A549 (cell line): ENCODE measurements at regions of chr11 and their contacts with region 1.

Region 1: DNA sequence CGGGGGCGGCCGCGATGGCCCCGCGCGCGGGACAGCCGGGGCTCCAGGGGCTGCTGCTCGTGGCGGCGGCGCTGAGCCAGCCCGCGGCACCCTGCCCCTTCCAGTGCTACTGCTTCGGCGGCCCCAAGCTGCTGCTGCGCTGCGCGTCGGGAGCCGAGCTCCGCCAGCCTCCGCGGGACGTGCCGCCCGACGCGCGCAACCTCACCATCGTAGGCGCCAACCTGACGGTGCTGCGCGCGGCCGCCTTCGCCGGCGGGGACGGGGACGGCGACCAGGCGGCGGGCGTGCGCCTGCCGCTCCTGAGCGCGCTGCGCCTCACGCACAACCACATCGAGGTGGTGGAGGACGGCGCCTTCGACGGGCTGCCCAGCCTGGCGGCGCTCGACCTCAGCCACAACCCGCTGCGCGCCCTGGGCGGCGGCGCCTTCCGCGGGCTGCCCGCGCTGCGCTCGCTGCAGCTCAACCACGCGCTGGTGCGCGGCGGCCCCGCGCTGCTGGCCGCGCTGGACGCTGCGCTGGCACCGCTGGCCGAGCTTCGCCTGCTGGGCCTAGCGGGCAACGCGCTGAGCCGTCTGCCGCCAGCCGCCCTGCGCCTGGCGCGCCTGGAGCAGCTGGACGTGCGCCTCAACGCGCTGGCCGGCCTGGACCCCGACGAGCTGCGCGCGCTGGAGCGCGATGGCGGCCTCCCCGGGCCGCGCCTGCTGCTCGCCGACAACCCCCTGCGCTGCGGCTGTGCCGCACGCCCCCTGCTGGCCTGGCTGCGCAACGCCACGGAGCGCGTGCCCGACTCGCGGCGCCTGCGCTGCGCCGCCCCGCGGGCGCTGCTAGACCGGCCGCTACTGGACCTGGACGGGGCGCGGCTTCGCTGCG is 697 bp downstream of the TPBGL start:
- DNase-seq: peak; percentile 86 to 87
- ATAC-seq: peak; percentile 79 to 90
- H3K4me3 ChIP-seq: peak overlapping the region; percentile 54
- H3K27ac ChIP-seq: peak overlapping the region; percentile 68 to 81; a peak in 5 of 6 replicates
- H3K4me1 ChIP-seq: peaks cover 10% of the 10 kb centered on the region; the same call in 2 of the 3 replicates
- CTCF ChIP-seq: peak; percentile 99
- EP300 ChIP-seq: no peak
- POLR2A ChIP-seq: 0 out of 2 replicates have a peak, but pooled peaks have one; percentile 36
- RAD21 ChIP-seq: peak; percentile 40 to 69; a peak in 4 of 5 replicates

Region 2: GRCh38 chr11:74937696-74938475 is 303.4 kb before region 1 on chr11:
- CTCF ChIA-PET with region 1: interaction called, 160 read pairs
- POLR2A ChIA-PET with region 1: no interaction called
- DNase-seq: no peak
- ATAC-seq: no peak
- H3K4me3 ChIP-seq: no peak overlapping the region
- H3K27ac ChIP-seq: no peak overlapping the region
- H3K4me1 ChIP-seq: no peaks in the 10 kb centered on the region
- CTCF ChIP-seq: no peak
- EP300 ChIP-seq: no peak
- POLR2A ChIP-seq: no peak
- RAD21 ChIP-seq: no peak

Region 3: DNA sequence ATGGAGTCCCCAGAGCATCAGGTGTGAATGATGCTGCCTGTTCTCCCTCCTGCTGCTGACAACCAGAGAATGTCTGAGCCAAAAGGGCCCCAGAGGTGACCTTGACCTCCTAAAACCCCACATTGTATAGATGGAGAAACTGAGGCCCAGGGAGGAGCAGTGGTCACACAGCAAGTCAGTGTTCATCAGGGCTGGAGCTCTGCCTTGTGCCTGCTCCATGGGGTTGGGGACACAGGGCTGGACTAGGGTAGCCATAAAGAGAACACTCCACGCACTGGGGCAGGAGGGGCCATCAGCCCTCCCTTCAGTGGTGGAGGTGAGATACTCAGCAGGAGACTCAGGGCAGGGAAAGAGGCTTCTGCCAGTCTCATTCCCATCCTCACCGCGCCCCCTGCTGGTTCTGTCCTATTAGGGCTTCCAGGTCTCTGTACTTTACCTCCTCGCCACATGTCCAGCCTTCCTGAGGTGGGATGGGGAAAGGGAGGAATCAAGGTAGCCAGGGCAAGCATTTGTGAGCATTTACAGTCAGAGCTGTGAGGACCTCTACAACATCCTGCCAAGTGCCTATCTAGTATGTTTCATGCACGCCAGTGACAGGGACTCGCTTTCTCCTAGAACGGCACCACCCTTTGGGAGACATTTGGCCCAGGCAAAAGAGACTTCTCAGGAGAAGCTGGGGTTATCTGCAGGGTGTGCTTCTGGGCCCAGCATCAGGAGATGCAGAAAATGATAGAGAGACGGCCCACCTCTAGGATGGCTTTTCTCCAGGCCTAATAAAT is 209.3 kb before region 1 on chr11:
- CTCF ChIA-PET with region 1: interaction called, 355 read pairs
- POLR2A ChIA-PET with region 1: no interaction called
- DNase-seq: peak; percentile 71
- ATAC-seq: peak; percentile 85 to 95
- H3K4me3 ChIP-seq: no peak overlapping the region
- H3K27ac ChIP-seq: peak overlapping the region in 1 of 2 experiments; percentile 63; a peak in 3 of 6 replicates
- H3K4me1 ChIP-seq: peaks cover 9% of the 10 kb centered on the region; the same call in 1 of the 3 replicates
- CTCF ChIP-seq: peak; percentile 67
- EP300 ChIP-seq: no peak
- POLR2A ChIP-seq: no peak
- RAD21 ChIP-seq: peak; percentile 53 to 66

Region 4: DNA sequence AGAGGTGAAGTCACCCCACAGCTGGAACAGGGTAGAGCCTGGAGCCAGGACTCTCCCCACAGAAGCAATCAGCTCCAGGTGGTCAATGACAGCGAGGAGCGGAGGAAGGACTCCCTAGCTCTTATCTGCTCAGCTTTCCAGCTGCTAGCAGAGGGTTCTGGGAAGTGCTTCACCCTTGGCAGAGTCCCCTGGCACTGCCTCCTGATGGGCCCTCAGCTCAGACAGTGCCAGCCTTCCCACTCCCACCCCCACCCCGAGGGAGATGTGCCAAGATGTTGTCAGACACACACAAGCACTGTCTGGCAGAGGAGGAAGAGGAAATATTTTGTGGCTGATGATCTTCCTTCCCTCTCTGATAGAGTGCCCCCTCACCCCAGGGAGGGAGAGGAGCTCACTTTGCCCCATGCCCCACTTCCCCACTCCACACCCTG is 46.1 kb before region 1 on chr11:
- CTCF ChIA-PET with region 1: interaction called, 46 read pairs
- POLR2A ChIA-PET with region 1: no interaction called
- DNase-seq: no peak
- ATAC-seq: peak in 1 of 2 experiments; percentile 34; a peak in 3 of 6 replicates
- H3K4me3 ChIP-seq: no peak overlapping the region
- H3K27ac ChIP-seq: peak overlapping the region in 1 of 2 experiments; percentile 55; a peak in 2 of 6 replicates
- H3K4me1 ChIP-seq: peaks cover 19% of the 10 kb centered on the region; the same call in 2 of the 3 replicates
- CTCF ChIP-seq: no peak
- EP300 ChIP-seq: no peak
- POLR2A ChIP-seq: no peak
- RAD21 ChIP-seq: no peak

Region 5: DNA sequence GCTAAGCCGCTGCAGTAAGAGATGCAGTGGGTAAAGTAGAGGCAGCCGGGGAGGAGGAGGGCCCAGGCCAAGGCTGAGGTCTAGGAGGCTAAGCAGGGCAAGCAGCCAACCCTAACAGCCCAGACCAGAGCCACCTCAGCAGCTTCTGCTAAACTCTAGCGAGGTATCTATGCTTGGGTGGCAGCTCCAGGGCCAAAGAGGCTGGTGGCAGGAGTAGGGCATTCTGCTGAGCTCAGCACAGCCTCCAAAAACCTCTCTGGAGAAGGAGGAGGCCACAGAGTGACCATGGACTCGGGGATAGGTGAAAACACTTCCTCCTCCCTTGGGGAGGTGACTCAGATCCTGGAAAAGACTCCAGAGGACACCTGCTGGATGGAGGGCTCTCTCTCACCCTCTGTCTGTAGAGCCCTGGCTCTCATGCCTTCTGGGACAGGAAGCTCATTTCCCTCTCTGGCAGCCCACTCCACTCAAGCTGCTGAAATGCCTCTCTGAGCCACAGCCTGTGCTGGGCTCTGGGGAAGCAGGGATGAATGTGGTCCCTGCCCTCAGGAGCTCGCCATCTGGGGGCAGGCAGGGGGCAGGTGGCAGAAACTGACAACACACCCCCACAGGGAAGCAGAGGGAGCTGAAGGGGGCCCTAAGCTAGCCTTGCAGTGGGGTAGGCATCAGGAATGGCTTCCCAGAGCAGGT is 17.2 kb before region 1 on chr11:
- CTCF ChIA-PET with region 1: interaction called, 123 read pairs
- POLR2A ChIA-PET with region 1: no interaction called
- DNase-seq: peak; percentile 21 to 29
- ATAC-seq: peak; percentile 92 to 95
- H3K4me3 ChIP-seq: no peak overlapping the region
- H3K27ac ChIP-seq: no peak overlapping the region
- H3K4me1 ChIP-seq: no peaks in the 10 kb centered on the region
- CTCF ChIP-seq: no peak
- EP300 ChIP-seq: no peak
- POLR2A ChIP-seq: no peak
- RAD21 ChIP-seq: no peak

Region 6: DNA sequence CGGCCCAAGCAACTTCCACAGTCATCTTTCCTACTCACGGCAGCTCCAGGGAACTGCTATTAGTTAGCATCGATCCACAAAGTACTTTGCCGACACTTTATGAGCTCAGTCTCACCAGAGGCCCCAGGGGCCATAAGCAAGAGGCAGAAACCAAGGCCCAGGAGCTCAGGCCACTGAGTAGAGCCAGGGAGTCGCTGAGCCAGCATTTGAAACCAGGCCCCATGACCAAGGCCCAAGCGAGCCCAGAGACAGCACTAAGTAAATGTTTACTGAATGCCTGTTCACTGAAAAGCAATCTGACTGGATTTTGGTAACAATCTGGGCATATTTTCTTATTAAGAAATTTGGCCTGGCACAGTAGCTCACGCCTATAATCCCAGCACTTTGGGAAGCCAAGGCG is 66.8 kb after region 1 on chr11:
- CTCF ChIA-PET with region 1: interaction called, 10 read pairs
- POLR2A ChIA-PET with region 1: no interaction called
- DNase-seq: no peak
- ATAC-seq: no peak
- H3K4me3 ChIP-seq: no peak overlapping the region
- H3K27ac ChIP-seq: no peak overlapping the region
- H3K4me1 ChIP-seq: no peaks in the 10 kb centered on the region
- CTCF ChIP-seq: no peak
- EP300 ChIP-seq: no peak
- POLR2A ChIP-seq: no peak
- RAD21 ChIP-seq: no peak